ENCODE measurements at regions of chr16 and their contacts with region 1.

Region 1: DNA sequence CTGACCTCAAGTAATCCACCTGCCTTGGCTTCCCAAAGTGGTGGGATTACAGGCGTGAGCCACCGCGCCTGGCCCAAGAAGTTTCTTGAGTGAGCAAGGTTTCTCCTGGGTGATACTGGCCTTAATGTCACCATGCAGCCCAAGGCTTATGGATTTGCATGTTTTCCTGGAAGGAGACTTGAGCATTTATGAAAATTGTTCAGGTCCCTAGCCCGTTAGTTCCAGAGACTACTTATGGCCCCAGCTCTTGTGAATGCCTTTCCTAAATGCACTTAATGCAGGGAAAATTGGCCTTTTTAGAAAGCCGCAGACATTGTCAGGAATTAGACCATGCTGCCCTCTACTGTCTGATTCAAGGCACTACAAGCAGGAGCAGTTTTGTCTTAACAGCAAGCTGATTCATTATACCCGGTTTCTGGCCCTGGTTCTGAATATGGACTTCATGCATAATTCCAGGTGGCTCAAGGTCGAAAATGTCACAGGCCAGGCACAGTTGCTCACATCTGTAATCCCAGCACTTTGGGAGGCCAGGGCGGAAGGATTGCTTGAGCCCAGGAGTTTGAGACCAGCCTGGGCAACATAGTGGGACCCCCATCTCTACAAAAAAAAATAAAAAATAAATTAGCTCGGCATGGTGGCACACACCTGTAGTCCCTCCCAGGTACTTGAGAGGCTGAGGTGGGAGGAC is 91.3 kb downstream of the SNX29 start:
- DNase-seq: peak; percentile 57
- ATAC-seq: peak; percentile 94
- H3K4me3 ChIP-seq: no peak overlapping the region
- H3K27ac ChIP-seq: no peak overlapping the region
- H3K4me1 ChIP-seq: peaks cover 14% of the 10 kb centered on the region
- H3K27me3 ChIP-seq: no peaks in the 10 kb centered on the region
- CTCF ChIP-seq: peak; percentile 93

Region 2: DNA sequence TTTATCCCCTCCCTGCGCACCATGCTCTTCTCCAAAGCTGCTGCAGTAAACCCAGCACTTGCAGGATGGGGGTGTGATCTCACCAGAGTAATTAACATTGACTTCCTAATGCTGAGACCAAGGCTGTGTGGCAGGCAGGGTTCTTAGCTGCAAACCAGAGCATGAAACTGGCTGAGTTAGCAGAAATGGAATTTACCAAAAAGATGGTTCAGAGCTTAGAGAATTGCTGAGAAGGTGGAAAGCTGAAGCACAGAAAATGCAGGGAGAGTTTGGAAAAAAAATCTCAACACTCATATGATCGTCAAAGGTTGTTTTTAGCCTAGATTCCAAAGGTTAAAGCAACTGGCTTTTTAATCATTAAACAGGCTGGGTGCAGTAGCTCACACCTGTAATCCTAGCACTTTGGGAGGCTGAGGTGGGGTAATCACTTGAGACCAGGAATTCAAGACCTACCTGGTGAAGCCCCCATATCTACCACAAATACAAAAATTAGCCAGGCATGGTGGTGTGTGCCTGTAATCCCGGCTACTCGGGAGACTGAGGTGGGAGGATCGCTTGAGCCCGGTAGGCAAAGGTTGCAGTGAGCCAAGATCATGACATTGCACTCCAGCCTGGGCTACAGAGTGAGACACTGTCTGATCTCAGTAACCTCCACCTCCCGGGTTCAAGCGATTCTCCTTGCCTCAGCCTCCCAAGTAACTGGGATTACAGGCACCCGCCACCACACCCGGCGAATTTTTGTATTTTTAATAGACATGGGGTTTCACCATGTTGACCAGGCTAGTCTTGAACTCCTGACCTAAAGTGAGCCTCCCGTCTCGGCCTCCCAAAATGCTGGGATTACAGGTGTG is 319.2 kb before region 1 on chr16:
- intact Hi-C with region 1: no loop called
- DNase-seq: no peak
- ATAC-seq: no peak
- H3K4me3 ChIP-seq: no peak overlapping the region
- H3K27ac ChIP-seq: no peak overlapping the region
- H3K4me1 ChIP-seq: peaks cover 2% of the 10 kb centered on the region
- H3K27me3 ChIP-seq: no peaks in the 10 kb centered on the region
- CTCF ChIP-seq: no peak

Region 3: GRCh38 chr16:11857161-11857560 is 210.7 kb before region 1 on chr16:
- intact Hi-C with region 1: no loop called
- DNase-seq: no peak
- ATAC-seq: no peak
- H3K4me3 ChIP-seq: no peak overlapping the region
- H3K27ac ChIP-seq: no peak overlapping the region
- H3K4me1 ChIP-seq: peaks cover 14% of the 10 kb centered on the region
- H3K27me3 ChIP-seq: no peaks in the 10 kb centered on the region
- CTCF ChIP-seq: no peak

Region 4: GRCh38 chr16:12002447-12003006 is 65.3 kb before region 1 on chr16:
- intact Hi-C with region 1: loop called (anchors 10 kb)
- DNase-seq: no peak
- ATAC-seq: no peak
- H3K4me3 ChIP-seq: no peak overlapping the region
- H3K27ac ChIP-seq: no peak overlapping the region
- H3K4me1 ChIP-seq: no peaks in the 10 kb centered on the region
- H3K27me3 ChIP-seq: no peaks in the 10 kb centered on the region
- CTCF ChIP-seq: no peak